ENCODE measurements at regions of chrX and their contacts with region 1.

Region 1: DNA sequence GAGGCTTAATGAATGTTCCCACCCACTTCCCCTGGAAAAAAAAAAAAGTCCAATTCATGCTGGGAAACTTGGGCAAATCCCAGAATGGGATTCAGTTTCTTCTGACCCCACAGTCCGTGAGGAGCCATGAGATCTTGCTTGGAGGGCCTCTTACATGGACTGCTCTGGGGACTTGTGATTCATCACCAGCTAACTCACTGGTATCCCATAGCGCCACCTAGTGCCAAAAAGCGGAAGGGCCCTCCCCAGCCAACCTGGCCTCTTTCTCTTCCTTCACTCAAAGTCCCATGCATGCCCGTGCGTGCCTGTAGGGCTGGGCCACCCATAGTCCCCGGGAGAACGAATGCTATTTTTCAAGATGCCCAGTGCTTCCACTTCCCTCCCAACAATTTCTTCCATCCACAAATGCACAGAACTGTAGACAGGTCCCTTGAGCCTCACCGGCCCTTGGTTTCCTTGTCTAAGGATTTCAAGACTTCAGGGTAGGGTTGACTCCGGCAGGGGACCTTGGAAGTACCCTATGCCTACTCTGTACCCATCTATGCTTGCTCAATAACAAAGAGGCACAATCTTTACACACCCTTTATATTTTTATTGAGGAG is 5.1 kb downstream of the RTL5 start:
- DNase-seq: peak; percentile 57
- H3K4me3 ChIP-seq: no peak overlapping the region
- H3K27ac ChIP-seq: no peak overlapping the region
- H3K27me3 ChIP-seq: no peaks in the 10 kb centered on the region
- CTCF ChIP-seq: peak; percentile 81

Region 2: DNA sequence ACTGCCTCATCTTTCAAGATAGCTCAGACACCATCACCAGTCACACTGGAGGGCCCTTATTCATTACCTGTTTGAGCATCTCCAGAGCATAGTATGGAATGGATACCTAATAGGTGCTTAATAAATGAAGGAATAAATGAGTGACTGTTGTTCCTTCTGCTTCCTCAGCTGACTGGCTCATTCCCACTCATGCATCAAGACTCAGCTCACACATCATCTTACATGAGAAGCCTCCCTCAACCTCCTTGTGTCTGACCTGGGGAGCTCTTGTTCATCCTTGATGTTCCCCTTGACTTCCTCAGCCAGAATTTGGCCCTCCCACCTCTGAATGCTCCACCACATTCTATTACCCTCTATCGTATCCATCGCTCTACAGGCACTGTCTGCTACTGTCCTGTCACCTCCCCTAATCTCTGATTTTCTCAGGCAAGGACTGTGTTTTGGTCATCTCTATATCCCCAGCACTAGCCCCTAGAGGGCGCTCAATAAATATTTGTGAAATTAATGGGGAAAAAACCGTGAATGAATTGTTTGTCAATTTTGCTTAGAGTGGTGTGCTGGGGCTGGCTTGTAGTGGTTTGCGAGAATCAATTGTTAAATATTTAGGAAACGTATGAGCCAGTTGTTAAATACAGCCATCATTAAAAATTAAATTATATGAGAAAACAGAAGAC is 127.7 kb before region 1 on chrX:
- CTCF ChIA-PET with region 1: interaction called, 16 read pairs
- POLR2A ChIA-PET with region 1: no interaction called
- DNase-seq: no peak
- H3K4me3 ChIP-seq: no peak overlapping the region
- H3K27ac ChIP-seq: no peak overlapping the region
- H3K27me3 ChIP-seq: no peaks in the 10 kb centered on the region
- CTCF ChIP-seq: peak; percentile 63

Region 3: DNA sequence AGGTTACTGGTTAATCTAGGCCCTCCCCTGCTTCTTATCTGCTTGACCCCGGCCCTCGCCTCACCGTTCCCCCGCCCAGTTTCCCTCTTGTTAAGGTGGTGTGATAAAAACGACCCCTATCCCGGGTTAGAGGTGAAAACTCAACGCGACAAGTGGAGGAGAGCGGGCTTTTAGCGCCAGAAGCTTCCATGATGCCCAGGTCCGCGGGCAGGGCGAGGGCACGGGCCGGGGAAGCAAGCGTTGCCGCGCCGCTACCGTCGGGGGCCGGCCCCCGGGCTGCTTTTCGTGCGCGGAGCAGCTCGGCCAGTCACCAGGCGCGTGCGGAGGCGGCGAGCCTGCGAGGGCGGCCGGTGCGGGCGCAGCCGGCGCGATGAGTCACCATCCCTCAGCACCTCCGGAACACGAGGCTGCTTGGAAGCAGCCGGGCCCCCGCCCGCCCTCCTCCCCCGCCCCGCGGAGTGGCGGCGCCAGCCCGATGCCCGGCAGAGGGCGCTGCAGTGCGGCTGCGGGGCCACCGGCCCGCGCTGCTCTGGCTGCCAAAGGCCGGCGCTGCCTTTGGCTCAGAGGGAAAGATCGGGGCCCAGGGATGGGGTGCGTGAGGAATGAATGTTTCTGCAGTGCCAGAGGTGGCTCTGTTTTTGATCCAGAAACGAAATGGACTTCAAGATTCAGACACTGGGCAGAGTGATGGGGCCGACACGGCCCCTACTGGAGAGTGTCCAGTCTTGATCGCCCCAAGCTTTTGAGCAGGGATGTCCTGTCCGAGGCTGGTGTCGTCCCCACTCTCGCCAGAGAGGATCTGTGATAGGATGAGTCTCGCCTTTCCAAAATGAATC is 108.1 kb before region 1 on chrX:
- CTCF ChIA-PET with region 1: interaction called, 26 read pairs
- POLR2A ChIA-PET with region 1: interaction called, 7 read pairs
- DNase-seq: peak; percentile 57
- H3K4me3 ChIP-seq: peak overlapping the region; percentile 15; the same call in 1 of the 2 replicates
- H3K27ac ChIP-seq: no peak overlapping the region
- H3K27me3 ChIP-seq: no peaks in the 10 kb centered on the region
- CTCF ChIP-seq: peak; percentile 39; the same call in 1 of the 2 replicates

Region 4: GRCh38 chrX:72094894-72095293 is 31.7 kb before region 1 on chrX:
- CTCF ChIA-PET with region 1: no interaction called
- POLR2A ChIA-PET with region 1: no interaction called
- DNase-seq: no peak
- H3K4me3 ChIP-seq: no peak overlapping the region
- H3K27ac ChIP-seq: no peak overlapping the region
- H3K27me3 ChIP-seq: no peaks in the 10 kb centered on the region
- CTCF ChIP-seq: no peak

Region 5: DNA sequence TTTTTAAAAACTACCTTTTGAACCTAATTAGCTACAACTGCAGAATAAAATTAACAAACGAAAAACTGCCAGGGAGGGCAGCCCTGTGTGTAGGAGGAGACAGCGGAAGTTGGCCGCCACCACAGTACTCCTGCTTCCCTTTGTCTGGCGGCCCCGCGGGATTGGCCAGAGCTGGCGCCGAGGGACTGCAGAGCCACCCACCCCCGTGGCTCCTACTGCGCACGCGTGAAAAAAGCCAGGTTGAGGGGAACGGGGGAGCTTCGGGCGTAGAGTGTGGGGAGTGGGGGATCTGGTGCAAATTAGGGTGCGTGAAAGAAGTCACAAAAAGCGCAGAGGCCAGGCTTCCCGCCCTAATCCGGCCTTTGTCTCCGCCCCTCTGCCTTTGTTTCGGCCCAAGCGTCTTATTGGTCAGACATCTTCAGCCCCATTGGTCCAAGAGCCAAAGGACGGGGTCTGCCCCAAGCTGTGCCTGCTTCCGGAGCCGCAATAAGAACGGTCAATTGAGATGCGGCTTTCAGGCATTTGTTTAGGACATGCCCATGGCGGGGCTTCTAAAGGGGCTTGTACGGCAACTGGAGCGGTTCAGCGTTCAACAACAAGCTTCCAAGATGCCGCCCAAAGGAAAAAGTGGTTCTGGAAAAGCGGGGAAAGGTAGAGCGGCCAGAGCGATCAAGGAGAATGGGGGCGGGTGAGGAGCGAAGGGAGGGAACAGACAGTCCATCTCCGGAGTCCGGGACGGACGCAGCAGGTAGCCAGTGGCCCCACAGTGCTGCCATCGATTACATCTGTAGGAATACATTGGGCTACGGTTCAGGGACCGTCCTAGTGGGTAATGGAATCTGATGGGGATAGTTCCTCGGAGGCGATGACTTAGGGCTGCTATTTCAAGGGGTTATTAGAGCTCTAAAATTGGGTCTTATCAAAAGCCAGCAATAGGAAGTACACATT is 54.8 kb after region 1 on chrX and contains the start of gene PIN4:
- CTCF ChIA-PET with region 1: interaction called, 4 read pairs
- POLR2A ChIA-PET with region 1: interaction called, 11 read pairs
- DNase-seq: peak; percentile 91
- H3K4me3 ChIP-seq: peak within 1 kb of the TSS; percentile 84
- H3K27ac ChIP-seq: peak within 1 kb of the TSS; percentile 92
- H3K27me3 ChIP-seq: no peaks in the 10 kb centered on the region
- CTCF ChIP-seq: no peak
- polyA plus RNA-seq, gene PIN4: 13.1 and 16.9 TPM in 2 replicates